ENCODE measurements at regions of chr1 and their contacts with region 1.

Region 1: DNA sequence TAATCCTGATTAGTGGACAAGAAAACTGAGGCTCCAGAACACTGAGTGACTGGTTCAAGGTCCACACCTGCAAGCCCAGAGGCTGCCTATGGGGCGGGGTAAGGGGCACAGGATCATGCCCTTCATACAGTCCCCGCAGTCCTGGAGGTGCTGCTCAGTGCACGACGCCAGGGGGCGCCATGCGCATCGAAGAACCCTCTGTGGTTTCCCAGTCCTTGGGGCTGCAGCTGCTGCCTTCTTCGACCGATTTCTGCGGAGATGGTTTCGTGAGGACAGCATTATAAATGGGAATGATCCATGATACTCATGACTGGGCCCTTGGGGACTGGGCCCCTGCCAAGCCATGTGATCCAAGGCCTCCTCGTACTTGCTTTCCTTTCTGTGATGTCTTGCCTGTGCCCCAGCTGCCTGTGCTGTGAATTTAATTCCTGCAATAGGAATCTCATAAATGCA is 37.1 kb upstream of the ARHGEF10L start:
- DNase-seq: peak; percentile 79
- H3K4me3 ChIP-seq: no peak overlapping the region
- H3K27ac ChIP-seq: peak overlapping the region; percentile 32 to 56
- H3K4me1 ChIP-seq: no peaks in the 10 kb centered on the region
- H3K27me3 ChIP-seq: no peaks in the 10 kb centered on the region
- CTCF ChIP-seq: peak; percentile 85 to 95 (median 94)
- POLR2A ChIP-seq: no peak

Region 2: DNA sequence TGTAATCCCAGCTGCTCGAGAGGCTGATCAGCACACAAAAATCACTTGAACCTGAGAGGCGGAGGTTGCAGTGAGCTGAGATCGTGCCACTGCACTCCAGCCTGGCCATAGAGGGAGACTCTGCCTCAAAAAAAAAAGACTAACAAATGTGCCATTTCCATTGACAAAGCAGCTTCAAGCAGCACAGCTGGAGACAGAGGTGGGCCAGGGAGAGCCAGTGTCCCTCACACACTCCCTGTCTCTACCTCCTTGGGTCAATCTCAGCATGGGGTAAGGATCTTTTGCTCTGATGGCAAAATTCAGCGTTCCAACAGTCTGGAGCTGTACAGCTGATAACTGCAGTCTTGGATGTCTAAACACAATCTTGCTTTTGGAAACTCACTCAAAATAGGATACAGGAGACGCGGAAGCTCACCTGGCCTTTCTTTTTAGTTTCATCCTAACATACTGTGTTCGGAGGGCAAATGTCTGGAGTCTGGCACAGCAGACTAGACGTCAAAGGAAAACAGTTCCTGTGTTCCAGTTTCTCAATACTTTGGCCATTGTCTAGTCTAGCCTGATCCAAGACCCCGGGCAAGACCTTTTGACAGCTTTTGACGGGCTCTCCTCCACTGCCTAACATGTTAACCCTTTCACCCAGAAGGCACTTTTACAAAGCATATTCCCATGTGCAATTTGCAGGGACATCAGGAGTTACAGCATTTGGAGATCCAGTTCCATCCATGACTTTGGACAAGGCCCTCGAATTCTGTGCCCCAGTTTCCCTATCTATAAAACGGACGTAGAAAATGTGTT is 65.8 kb before region 1 on chr1:
- intact Hi-C with region 1: no loop called
- DNase-seq: no peak
- H3K4me3 ChIP-seq: peak overlapping the region; percentile 63 to 68
- H3K27ac ChIP-seq: peak overlapping the region; percentile 49 to 81
- H3K4me1 ChIP-seq: peaks cover 6% of the 10 kb centered on the region
- H3K27me3 ChIP-seq: no peaks in the 10 kb centered on the region
- CTCF ChIP-seq: no peak
- POLR2A ChIP-seq: no peak

Region 3: DNA sequence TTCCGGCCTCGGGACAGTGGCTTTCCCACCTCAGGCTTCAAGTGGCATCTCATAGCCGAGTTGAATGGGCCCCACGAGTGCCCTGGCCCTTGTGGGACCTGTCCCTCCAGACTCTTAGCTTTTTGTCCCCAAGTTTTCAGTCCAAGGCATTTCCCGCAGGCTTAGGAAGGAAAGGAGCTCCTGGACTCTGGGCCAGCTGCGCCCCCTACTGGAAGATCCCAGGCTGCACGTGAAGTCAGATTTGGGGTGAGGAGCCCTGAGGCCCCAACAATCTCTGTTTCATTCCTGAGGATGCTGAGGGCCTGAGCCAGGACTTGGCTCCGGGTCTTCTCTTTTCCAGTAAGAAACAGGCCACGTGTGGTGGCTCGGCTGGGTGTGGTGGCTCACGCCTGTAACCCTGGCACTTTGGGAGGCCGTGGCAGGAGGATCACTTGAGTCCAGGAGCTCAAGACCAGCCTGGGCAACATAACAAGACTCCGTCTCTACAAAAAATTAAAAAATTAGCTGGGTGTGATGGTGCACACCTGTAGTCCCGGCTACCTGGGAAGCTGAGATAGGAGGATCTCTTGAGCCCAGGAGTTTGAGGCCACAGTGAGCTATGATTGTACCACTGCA is 104.6 kb after region 1 on chr1:
- intact Hi-C with region 1: loop called (anchors 2 kb)
- DNase-seq: peak; percentile 66
- H3K4me3 ChIP-seq: no peak overlapping the region
- H3K27ac ChIP-seq: peak overlapping the region; percentile 40 to 56
- H3K4me1 ChIP-seq: no peaks in the 10 kb centered on the region
- H3K27me3 ChIP-seq: no peaks in the 10 kb centered on the region
- CTCF ChIP-seq: peak; percentile 88 to 93 (median 92)
- POLR2A ChIP-seq: no peak

Region 4: DNA sequence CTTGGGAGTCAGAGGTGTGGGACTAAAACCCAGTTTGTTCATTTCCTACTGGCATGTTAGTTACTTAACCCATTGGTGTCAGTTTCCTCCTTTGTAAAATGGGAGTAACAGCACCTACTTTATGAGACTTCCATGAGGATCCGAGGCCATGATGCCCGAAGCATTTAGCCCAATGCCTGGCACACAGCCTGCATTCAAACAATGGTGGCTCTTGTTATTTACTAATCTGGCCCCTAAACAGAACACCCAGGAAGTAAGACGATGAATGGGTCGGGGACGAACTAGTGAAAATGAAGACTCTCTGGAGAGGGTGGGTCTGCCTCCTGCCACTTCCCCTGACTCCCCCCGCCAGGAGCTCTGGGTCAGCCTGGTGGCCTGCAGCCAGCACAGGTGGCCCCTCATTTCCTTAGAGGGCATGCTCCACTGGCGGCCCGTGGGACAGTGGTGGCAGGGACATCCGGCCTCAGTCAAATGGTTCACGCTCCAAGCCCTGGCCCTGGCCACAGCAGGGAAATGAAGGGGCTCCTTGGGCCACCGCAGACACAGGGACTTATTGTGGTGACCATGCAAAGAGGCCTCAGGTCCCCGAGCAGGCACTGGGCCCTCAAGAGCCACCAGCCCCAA is 1366.6 kb after region 1 on chr1:
- intact Hi-C with region 1: loop called (anchors 10 kb)
- DNase-seq: no peak
- H3K4me3 ChIP-seq: no peak overlapping the region
- H3K27ac ChIP-seq: no peak overlapping the region
- H3K4me1 ChIP-seq: no peaks in the 10 kb centered on the region
- H3K27me3 ChIP-seq: no peaks in the 10 kb centered on the region
- CTCF ChIP-seq: no peak
- POLR2A ChIP-seq: no peak

Measured in prostate gland (tissue), 2 donors.